Activated B cell treated with CpG ODN at 0.5 μM for 24 hours (primary cell): ENCODE measurements at regions of chr1 and their contacts with region 1.

Region 1: GRCh38 chr1:212608209-212608955 is at the start of gene ATF3:
- DNase-seq: peak; percentile 76
- ATAC-seq: peak; percentile 84
- H3K4me3 Mint-ChIP-seq: peak within 1 kb of the TSS; percentile 95
- H3K27ac Mint-ChIP-seq: peak within 1 kb of the TSS; percentile 90
- H3K4me1 Mint-ChIP-seq: peaks cover 29% of the 10 kb centered on the region
- H3K27me3 Mint-ChIP-seq: peaks cover 32% of the 10 kb centered on the region
- CTCF ChIP-seq: no peak
- total RNA-seq, gene ATF3: 13.1 and 16.8 TPM in 2 replicates

Region 2: DNA sequence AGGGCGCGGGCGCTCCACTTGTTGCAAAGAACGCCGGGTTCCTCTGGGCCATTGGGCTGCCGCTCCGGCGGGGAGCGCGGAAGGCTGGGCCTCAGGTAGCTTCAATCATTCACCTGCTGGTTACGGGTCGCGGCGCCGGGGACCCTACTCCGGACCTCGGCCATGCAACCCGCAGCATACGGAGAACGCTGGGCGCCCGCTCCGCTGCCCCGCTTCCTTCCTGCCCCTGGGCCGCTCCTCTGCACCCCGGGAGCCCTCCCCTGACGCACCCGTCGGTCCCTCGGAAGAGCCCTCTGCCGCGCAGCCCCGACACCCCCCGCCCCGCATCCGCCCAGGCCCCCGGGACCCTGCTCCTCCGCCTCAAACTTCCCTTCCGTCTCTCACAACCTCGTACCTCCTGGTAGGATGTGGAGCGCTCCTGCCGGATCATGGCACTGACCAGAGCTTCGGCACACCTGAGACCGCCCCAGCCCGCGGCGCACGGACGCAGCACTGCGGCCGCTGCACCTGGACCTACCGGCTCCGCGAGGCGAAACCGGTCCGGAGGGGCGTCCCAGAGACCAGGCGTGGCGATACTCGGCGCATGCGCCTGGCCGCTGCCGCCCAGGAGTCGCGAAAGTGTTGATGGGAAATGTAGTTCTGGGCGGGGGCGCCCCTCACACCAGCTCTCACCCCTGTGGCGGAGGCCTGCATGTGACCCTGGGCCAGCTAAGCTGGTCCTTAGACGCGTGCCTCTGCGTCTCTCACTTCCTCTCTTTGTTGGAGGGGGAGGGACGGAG is 193.9 kb before region 1 on chr1 and contains the start of gene PACC1:
- CTCF ChIA-PET with region 1: no interaction called
- POLR2A ChIA-PET with region 1: interaction called, 4 read pairs
- intact Hi-C with region 1: loop called (anchors 2 kb)
- DNase-seq: peak; percentile 93
- ATAC-seq: peak; percentile 98
- H3K4me3 Mint-ChIP-seq: peak within 1 kb of the TSS; percentile 100
- H3K27ac Mint-ChIP-seq: peak within 1 kb of the TSS; percentile 96
- H3K4me1 Mint-ChIP-seq: peaks cover 43% of the 10 kb centered on the region
- H3K27me3 Mint-ChIP-seq: no peaks in the 10 kb centered on the region
- CTCF ChIP-seq: no peak
- total RNA-seq, gene PACC1: 15.2 and 20.0 TPM in 2 replicates

Region 3: DNA sequence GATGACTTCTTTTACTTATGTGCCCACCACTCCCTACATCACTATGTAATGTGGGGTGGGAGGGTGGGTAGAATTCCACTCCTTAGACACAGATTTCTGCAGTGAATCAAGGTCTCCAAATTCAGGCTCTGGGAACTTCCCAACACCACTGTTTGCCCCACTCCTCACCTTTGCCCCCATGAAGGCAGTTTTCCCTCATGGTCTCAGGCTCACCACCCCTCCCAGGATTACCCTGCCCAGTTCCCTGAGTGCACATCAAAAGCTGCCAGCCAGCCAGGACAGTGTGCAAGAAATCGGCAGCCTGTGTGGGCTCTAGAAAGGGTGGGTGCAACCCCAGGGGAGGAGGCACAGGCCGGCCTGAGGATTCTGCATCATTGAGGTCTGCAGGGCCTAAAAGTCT is 160.9 kb before region 1 on chr1:
- CTCF ChIA-PET with region 1: no interaction called
- POLR2A ChIA-PET with region 1: no interaction called
- intact Hi-C with region 1: no loop called
- DNase-seq: no peak
- ATAC-seq: no peak
- H3K4me3 Mint-ChIP-seq: no peak overlapping the region
- H3K27ac Mint-ChIP-seq: no peak overlapping the region
- H3K4me1 Mint-ChIP-seq: no peaks in the 10 kb centered on the region
- H3K27me3 Mint-ChIP-seq: no peaks in the 10 kb centered on the region
- CTCF ChIP-seq: no peak

Region 4: DNA sequence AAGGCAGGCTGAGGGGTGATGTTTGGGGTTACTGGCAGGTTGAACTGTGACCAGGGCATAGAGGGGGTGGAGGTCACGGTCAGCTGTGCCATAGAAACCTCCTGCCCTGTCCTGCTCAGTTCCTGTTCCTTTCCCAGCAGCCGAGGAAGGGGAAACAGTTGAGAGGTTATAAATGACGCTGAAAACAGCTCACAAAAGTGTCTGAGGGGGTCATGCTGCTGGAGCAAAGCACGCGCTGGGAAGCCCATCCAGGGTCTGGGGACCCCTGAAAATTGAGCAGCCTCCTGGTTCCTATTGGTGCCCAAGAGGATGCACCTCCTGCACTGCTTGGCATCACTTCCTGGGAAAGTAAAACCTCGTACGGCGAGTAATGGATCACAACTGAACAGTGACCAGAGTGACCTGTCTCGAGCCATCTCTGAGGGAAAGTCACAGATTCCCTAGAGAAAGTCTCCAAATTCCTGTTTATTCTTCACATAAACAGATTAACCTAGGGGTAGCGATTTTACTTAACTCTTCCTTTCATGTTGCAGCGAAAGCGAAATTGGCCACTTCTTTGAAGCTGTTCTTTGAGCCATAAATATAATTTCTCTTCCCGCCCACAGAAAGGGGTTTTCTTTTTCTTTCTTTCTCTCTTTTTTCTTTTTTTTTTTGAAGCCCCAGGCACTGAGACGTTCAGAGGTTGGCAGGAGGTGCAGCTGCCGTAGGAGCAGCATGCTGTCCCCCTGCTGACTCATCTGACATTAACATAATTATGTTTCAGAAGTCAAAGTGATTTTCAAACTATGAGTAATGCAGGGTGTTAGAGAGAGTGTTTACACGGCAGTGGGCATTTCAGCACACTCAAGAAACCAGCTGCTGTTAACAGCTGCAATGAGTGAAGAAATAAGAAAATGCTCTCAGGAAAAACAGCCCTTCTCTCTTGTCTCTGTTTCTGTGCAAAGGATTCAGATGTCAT is 41.6 kb before region 1 on chr1:
- CTCF ChIA-PET with region 1: interaction called, 3 read pairs
- POLR2A ChIA-PET with region 1: interaction called, 70 read pairs
- intact Hi-C with region 1: loop called (anchors 1 kb)
- DNase-seq: no peak
- ATAC-seq: peak; percentile 98
- H3K4me3 Mint-ChIP-seq: peak overlapping the region; percentile 88
- H3K27ac Mint-ChIP-seq: peak overlapping the region; percentile 86
- H3K4me1 Mint-ChIP-seq: peaks cover 34% of the 10 kb centered on the region
- H3K27me3 Mint-ChIP-seq: no peaks in the 10 kb centered on the region
- CTCF ChIP-seq: no peak

Region 5: GRCh38 chr1:212630158-212630900 is 21.9 kb after region 1 on chr1:
- CTCF ChIA-PET with region 1: no interaction called
- POLR2A ChIA-PET with region 1: interaction called, 4 read pairs
- intact Hi-C with region 1: loop called (anchors 1 kb)
- DNase-seq: peak; percentile 58
- ATAC-seq: peak; percentile 98
- H3K4me3 Mint-ChIP-seq: no peak overlapping the region
- H3K27ac Mint-ChIP-seq: no peak overlapping the region
- H3K4me1 Mint-ChIP-seq: peaks cover 19% of the 10 kb centered on the region
- H3K27me3 Mint-ChIP-seq: peaks cover 12% of the 10 kb centered on the region
- CTCF ChIP-seq: peak; percentile 76

Region 6: GRCh38 chr1:212699104-212699624 is 90.8 kb after region 1 on chr1:
- CTCF ChIA-PET with region 1: no interaction called
- POLR2A ChIA-PET with region 1: interaction called, 11 read pairs
- intact Hi-C with region 1: loop called (anchors 1 kb)
- DNase-seq: peak; percentile 56
- ATAC-seq: peak; percentile 55
- H3K4me3 Mint-ChIP-seq: peak overlapping the region; percentile 88
- H3K27ac Mint-ChIP-seq: peak overlapping the region; percentile 79
- H3K4me1 Mint-ChIP-seq: peaks cover 45% of the 10 kb centered on the region
- H3K27me3 Mint-ChIP-seq: peaks cover 11% of the 10 kb centered on the region
- CTCF ChIP-seq: no peak

Region 7: DNA sequence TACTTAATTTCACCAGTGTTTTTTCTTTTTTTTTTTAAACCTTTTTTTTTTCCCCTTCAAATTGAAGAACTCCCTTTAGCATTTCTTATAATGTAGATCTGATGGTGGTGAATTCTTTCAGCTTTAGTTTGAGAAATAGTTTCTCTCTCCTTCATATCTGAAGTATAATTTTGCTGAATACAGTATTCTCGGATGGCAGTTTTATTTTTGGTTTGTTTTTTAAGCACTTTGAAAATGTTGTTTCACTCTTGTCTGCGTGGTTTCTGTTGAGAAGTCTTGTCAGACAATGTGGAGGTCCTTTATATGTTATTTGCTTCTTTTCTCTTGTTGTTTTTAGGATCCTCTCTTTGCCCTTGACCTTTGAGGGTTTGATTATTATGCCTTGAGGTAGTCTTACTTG is 577.8 kb after region 1 on chr1:
- CTCF ChIA-PET with region 1: no interaction called
- POLR2A ChIA-PET with region 1: no interaction called
- intact Hi-C with region 1: no loop called
- DNase-seq: no peak
- ATAC-seq: no peak
- H3K4me3 Mint-ChIP-seq: no peak overlapping the region
- H3K27ac Mint-ChIP-seq: no peak overlapping the region
- H3K4me1 Mint-ChIP-seq: no peaks in the 10 kb centered on the region
- H3K27me3 Mint-ChIP-seq: no peaks in the 10 kb centered on the region
- CTCF ChIP-seq: no peak